AG04449 (cell line): ENCODE measurements at regions of chr14 and their contacts with region 1.

Region 1: DNA sequence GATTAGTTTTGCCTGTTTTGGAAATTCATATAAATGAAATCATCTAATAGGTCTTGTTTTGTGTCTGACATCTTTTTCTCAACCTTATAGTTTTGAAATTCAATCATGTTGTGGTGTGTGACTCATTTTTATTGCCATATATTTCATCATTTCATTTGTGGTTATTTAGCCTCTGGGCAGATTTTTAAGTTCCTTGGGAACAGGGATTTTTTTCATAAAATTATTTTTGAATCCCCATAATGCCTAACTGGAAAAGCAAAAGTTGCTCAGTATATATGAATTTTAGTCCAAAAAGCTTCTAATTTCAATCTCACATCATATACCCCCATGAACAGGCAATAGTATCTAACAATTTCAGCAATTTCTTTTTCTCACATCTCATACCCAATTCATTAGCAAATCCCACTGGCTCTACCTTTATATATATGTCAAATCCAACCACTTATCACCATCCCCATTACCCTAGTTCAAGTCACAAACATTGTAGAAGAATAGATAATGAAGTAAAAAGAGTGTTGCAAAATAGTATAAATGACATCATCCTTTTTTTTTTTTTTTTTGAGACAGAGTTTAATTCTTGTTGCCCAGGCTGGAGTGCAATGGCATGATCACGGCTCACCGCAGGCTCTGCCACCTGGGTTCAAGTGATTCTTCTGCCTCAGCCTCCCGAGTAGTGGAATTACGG is 2.6 kb upstream of the OR6J1 start:
- DNase-seq: no peak
- H3K4me3 ChIP-seq: no peak overlapping the region
- CTCF ChIP-seq: no peak

Region 2: GRCh38 chr14:22630486-22630885 is 16.2 kb before region 1 on chr14:
- CTCF ChIA-PET with region 1: interaction called, 12 read pairs
- POLR2A ChIA-PET with region 1: interaction called, 4 read pairs
- DNase-seq: peak; percentile 72
- H3K4me3 ChIP-seq: no peak overlapping the region
- CTCF ChIP-seq: no peak

Region 3: GRCh38 chr14:22748631-22749068 is 101.9 kb after region 1 on chr14:
- CTCF ChIA-PET with region 1: no interaction called
- POLR2A ChIA-PET with region 1: no interaction called
- DNase-seq: no peak
- H3K4me3 ChIP-seq: no peak overlapping the region
- CTCF ChIP-seq: no peak

Region 4: DNA sequence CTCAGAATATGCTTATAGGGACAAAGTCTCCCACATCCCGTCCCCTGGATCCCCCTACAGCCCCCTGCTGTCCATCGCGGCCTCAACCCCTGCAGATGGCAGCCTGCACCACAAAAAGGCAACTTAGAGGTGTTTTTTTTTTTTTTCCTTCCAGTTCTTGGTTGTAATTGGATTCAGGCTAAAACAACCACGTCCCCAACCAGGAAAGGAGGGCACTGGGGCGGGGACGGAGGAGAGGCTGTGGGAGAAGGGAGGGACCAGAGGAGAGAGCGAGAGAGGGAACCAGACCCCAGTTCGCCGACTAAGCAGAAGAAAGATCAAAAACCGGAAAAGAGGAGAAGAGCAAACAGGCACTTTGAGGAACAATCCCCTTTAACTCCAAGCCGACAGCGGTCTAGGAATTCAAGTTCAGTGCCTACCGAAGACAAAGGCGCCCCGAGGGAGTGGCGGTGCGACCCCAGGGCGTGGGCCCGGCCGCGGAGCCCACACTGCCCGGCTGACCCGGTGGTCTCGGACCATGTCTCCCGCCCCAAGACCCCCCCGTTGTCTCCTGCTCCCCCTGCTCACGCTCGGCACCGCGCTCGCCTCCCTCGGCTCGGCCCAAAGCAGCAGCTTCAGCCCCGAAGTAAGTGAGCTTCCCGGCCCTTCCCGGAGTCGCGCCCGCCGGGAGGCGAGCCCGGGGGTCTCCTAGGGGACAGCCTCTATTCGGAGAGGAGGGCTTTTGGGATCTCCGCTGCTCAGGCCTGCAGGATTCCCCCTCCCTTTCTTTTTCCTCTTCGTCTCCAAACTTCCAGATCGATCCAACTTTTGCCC is 189.8 kb after region 1 on chr14 and contains the start of gene MMP14:
- CTCF ChIA-PET with region 1: no interaction called
- POLR2A ChIA-PET with region 1: no interaction called
- DNase-seq: no peak
- H3K4me3 ChIP-seq: peak within 1 kb of the TSS; percentile 90
- CTCF ChIP-seq: peak; percentile 58